ENCODE measurements at regions of chr5 and their contacts with region 1.

Region 1: GRCh38 chr5:116013936-116014335 is 18.3 kb upstream of the ARL14EPL start:
- DNase-seq: no peak
- H3K4me3 ChIP-seq: no peak overlapping the region
- H3K27ac ChIP-seq: no peak overlapping the region
- H3K4me1 ChIP-seq: no peaks in the 10 kb centered on the region
- CTCF ChIP-seq: no peak

Region 2: GRCh38 chr5:115946655-115947054 is 67.3 kb before region 1 on chr5:
- CTCF ChIA-PET with region 1: no interaction called
- POLR2A ChIA-PET with region 1: no interaction called
- intact Hi-C with region 1: loop called (anchors 2 kb)
- DNase-seq: no peak
- H3K4me3 ChIP-seq: no peak overlapping the region
- H3K27ac ChIP-seq: no peak overlapping the region
- H3K4me1 ChIP-seq: no peaks in the 10 kb centered on the region
- CTCF ChIP-seq: no peak

Region 3: DNA sequence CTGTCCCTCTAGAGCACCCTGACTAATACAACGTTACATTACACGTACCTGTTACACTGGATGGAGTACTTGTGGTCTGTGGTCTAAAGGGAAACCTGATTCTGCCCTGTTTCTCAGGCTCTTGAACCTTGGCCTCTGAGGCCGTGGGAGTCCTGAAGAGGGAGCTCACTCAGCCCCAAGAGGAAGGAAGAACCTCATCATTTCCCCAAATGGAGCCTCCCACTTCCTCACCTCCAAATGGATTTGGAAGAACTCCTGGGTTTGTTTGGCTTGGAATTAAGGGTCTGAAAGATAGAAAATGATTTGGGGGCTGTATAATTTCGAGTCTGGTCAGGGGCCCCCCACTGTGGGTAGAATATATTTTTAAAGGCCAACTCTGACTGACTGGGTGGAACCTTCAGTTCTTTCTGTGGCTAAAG is 360.5 kb after region 1 on chr5:
- CTCF ChIA-PET with region 1: no interaction called
- POLR2A ChIA-PET with region 1: no interaction called
- intact Hi-C with region 1: no loop called
- DNase-seq: no peak
- H3K4me3 ChIP-seq: no peak overlapping the region
- H3K27ac ChIP-seq: no peak overlapping the region
- H3K4me1 ChIP-seq: no peaks in the 10 kb centered on the region
- CTCF ChIP-seq: no peak